CD14-positive monocyte (primary cell): ENCODE measurements at regions of chr4 and their contacts with region 1.

Region 1: DNA sequence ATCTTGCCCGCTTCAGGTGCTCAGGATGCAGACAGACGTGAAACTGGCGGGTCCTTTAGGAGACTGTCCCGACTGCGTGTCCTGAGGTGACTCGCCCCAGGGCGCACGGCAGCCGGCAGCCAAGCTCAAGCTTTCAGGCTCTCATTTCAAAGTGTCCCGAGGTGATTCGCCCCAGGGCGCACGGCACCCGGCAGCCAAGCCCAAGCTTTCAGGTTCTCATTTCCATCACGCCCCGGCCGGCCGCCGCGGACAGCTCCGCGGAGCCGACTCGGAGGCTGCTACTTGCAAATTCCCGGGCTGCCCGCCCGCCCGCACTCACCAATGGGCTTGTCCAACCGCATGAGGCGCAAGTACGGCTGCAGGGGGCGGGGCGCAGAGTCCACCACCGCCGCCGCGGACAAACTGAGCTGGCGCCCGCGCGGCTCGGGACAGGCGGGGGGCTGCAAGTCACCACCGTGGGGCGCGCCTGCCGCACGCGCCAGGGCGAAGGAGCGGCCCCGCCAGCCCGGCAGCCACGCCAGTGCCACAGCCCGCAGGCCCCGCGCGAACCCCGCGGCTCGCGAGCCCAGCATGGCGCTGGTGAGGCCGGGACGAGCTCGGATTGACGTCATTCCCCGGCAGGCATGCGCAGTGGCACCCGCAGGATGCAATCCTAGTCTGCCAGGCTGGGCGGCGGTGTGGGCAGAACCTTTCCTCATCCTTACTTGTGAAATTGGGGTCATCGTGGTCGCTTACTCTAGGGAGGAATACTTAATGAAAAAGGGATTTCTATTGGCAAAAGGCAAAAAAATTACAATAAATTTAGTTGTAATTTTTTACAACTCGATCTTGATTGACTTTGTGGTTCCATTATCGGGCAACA is at the start of gene COQ2:
- DNase-seq: peak; percentile 94 to 95 (median 94)
- H3K4me3 ChIP-seq: peak within 1 kb of the TSS; percentile 75 to 89 (median 81)
- H3K4me3 Mint-ChIP-seq: peak within 1 kb of the TSS; percentile 91 to 96
- H3K27ac ChIP-seq: peak within 1 kb of the TSS; percentile 95 to 98
- H3K27ac Mint-ChIP-seq: peak within 1 kb of the TSS; percentile 99 to 100 (median 100)
- H3K4me1 ChIP-seq: peaks cover 37 to 46% of the 10 kb centered on the region in 2 donors
- H3K4me1 Mint-ChIP-seq: peaks cover 58% of the 10 kb centered on the region
- H3K27me3 ChIP-seq: no peaks in the 10 kb centered on the region
- H3K27me3 Mint-ChIP-seq: no peaks in the 10 kb centered on the region
- CTCF ChIP-seq: peak; percentile 10
- polyA plus RNA-seq, gene COQ2: 14.7 to 48.6 (median 40.7) TPM

Region 2: GRCh38 chr4:82865592-82865991 is 418.8 kb before region 1 on chr4:
- intact Hi-C with region 1: loop called in 1 of 2 experiments (anchors 10 kb)
- DNase-seq: peak; percentile 81 to 95 (median 91)
- H3K4me3 ChIP-seq: no peak overlapping the region
- H3K4me3 Mint-ChIP-seq: no peak overlapping the region
- H3K27ac ChIP-seq: peak overlapping the region; percentile 76 to 79
- H3K27ac Mint-ChIP-seq: peak overlapping the region; percentile 90 to 97 (median 95)
- H3K4me1 ChIP-seq: peaks cover 7 to 11% of the 10 kb centered on the region in 2 donors
- H3K4me1 Mint-ChIP-seq: peaks cover 14% of the 10 kb centered on the region
- H3K27me3 ChIP-seq: no peaks in the 10 kb centered on the region
- H3K27me3 Mint-ChIP-seq: peaks cover 0 to 1% (median 0%) of the 10 kb centered on the region in 3 donors
- CTCF ChIP-seq: no peak

Region 3: DNA sequence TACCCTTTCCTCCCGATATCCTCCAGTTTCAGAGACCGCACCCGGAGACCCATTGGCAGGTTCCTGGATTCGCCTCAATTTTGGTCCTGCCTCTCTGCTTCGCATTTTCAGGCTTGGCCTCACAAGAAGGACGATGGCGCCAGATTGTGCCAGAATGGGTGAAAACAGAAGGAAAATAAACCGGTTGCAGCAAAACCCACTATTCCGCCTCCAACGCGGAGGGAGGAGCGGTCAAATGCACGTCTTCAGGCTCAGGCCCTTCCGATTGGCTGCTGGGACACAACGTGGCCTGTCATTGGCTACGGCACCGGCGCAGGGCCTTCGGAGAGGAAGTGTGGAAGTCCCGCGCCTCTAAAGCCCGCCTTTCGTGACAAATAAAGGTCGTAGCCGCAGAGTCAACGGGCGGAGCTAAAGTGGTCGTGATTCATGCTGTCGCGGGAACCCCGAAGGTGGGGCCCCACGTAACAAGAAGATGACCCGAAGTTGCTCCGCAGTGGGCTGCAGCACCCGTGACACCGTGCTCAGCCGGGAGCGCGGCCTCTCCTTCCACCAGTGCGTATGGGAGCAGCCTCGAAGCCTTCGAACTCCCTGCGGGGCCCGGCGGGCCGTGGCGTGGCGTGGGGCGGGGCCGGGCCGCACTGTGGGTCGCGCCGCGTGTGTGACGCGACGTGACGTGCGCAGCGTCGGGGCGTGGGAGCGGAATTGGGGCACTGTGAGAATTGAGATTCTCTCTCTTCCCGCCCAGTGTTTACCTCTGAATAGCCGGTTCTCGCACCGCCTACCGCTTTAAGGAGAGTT is 383.9 kb before region 1 on chr4 and contains the start of gene THAP9:
- intact Hi-C with region 1: loop called in 1 of 2 experiments (anchors 5 kb)
- DNase-seq: peak; percentile 100
- H3K4me3 ChIP-seq: peak within 1 kb of the TSS; percentile 62 to 99 (median 99)
- H3K4me3 Mint-ChIP-seq: no peak within 1 kb of the TSS
- H3K27ac ChIP-seq: peak within 1 kb of the TSS; percentile 99 to 100
- H3K27ac Mint-ChIP-seq: no peak within 1 kb of the TSS
- H3K4me1 ChIP-seq: peaks cover 21 to 44% of the 10 kb centered on the region in 2 donors
- H3K4me1 Mint-ChIP-seq: peaks cover 27% of the 10 kb centered on the region
- H3K27me3 ChIP-seq: no peaks in the 10 kb centered on the region
- H3K27me3 Mint-ChIP-seq: no peaks in the 10 kb centered on the region
- CTCF ChIP-seq: no peak
- polyA plus RNA-seq, gene THAP9: 1.4 to 1.9 (median 1.4) TPM

Region 4: DNA sequence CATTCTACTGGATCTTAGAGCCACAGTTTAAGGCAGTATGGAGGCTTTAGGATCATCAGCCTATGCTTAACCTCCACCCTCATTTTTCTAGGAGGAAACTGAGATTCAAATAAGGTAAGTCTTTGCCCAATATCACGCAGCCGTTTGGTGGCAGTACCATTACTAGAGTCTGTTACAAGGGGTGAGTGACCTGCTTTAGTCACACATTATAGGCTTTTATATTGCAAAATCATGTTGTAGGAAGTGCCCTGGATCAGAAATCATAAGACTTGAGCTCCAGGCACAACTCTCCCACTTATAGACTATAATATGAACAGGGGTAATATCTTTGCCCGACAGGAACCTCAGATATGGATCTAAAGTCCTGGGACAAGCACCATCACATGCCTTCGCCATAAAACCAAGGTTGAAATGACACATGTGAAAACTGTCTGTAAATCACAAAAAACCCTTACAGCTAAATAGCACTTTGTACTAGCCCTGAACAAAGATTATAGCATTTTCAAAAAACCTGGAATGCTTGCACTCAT is 31.0 kb after region 1 on chr4:
- intact Hi-C with region 1: loop called in 1 of 2 experiments (anchors 2 kb)
- DNase-seq: peak in 2 of 3 donors; percentile 63 to 76
- H3K4me3 ChIP-seq: no peak overlapping the region
- H3K4me3 Mint-ChIP-seq: no peak overlapping the region
- H3K27ac ChIP-seq: peak overlapping the region in 1 of 2 donors; percentile 91
- H3K27ac Mint-ChIP-seq: peak overlapping the region; percentile 96 to 100 (median 99)
- H3K4me1 ChIP-seq: peaks cover 50 to 51% of the 10 kb centered on the region in 2 donors
- H3K4me1 Mint-ChIP-seq: peaks cover 51% of the 10 kb centered on the region
- H3K27me3 ChIP-seq: no peaks in the 10 kb centered on the region
- H3K27me3 Mint-ChIP-seq: peaks cover 0 to 1% (median 0%) of the 10 kb centered on the region in 3 donors
- CTCF ChIP-seq: no peak

Region 5: GRCh38 chr4:83328521-83329187 is 44.2 kb after region 1 on chr4:
- intact Hi-C with region 1: loop called (anchors 5 kb)
- DNase-seq: peak; percentile 42 to 52 (median 50)
- H3K4me3 ChIP-seq: peak overlapping the region in 1 of 3 experiments; percentile 1
- H3K4me3 Mint-ChIP-seq: peak overlapping the region; percentile 28 to 46
- H3K27ac ChIP-seq: peak overlapping the region; percentile 10 to 48
- H3K27ac Mint-ChIP-seq: peak overlapping the region; percentile 58 to 90 (median 74)
- H3K4me1 ChIP-seq: peaks cover 58 to 79% of the 10 kb centered on the region in 2 donors
- H3K4me1 Mint-ChIP-seq: peaks cover 78% of the 10 kb centered on the region
- H3K27me3 ChIP-seq: no peaks in the 10 kb centered on the region
- H3K27me3 Mint-ChIP-seq: peaks cover 0 to 2% (median 0%) of the 10 kb centered on the region in 3 donors
- CTCF ChIP-seq: peak; percentile 45

Region 6: GRCh38 chr4:83334425-83335241 is 50.2 kb after region 1 on chr4 and contains the start of gene HPSE:
- intact Hi-C with region 1: loop called (anchors 5 kb)
- DNase-seq: peak; percentile 67 to 73 (median 70)
- H3K4me3 ChIP-seq: peak within 1 kb of the TSS; percentile 69 to 86 (median 73)
- H3K4me3 Mint-ChIP-seq: peak within 1 kb of the TSS; percentile 90 to 93
- H3K27ac ChIP-seq: peak within 1 kb of the TSS; percentile 60 to 72
- H3K27ac Mint-ChIP-seq: peak within 1 kb of the TSS; percentile 70 to 92 (median 85)
- H3K4me1 ChIP-seq: peaks cover 53 to 60% of the 10 kb centered on the region in 2 donors
- H3K4me1 Mint-ChIP-seq: peaks cover 57% of the 10 kb centered on the region
- H3K27me3 ChIP-seq: no peaks in the 10 kb centered on the region
- H3K27me3 Mint-ChIP-seq: peaks cover 1 to 6% (median 2%) of the 10 kb centered on the region in 3 donors
- CTCF ChIP-seq: no peak
- polyA plus RNA-seq, gene HPSE: 21.2 to 65.8 (median 31.2) TPM

Region 7: DNA sequence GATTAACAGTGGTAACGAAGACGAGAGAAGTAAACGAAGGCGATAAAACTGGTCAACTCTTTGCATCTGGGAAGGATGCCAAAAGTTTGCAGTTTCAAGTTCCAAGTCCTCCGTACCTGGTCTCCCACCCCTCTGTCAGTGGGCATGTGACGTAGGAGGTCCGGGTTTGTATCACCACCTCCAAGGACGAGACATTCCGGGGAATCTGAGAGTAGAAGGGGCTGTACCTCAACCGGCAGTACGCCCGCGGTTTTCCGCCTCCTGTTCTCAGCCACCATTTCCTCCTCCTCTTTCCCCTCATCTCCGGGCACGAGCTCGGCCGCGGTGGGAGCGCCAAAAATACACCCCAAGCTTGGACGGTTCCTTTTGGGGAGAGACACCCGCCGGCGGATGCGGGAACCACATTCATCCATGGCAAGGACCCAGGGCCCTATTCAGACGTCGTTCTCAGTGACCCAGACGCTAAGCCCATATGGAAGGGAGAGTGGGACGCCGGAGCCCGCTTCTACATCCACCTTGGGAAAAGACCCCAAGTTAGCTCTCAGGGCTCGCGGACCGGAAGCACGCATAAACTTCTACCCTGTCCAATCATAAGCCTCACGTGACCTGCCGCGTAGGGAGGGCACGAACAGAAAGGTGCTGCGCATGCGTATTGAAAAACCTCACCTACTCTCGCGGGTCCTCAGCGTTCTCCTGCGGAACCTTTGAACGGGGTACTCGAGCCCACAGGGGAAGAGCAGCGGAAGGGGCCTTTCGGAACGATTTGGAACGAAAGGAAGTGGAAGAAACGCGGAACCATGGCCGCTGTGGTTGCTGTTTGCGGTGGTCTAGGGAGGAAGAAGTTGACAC is 171.1 kb after region 1 on chr4 and contains the starts of genes HELQ and MRPS18C:
- intact Hi-C with region 1: loop called in 1 of 2 experiments (anchors 10 kb)
- DNase-seq: peak; percentile 98 to 99 (median 99)
- H3K4me3 ChIP-seq: peak within 1 kb of the TSS; percentile 94 to 97 (median 95)
- H3K4me3 Mint-ChIP-seq: peak within 1 kb of the TSS; percentile 96 to 98
- H3K27ac ChIP-seq: peak within 1 kb of the TSS; percentile 99
- H3K27ac Mint-ChIP-seq: peak within 1 kb of the TSS; percentile 98 to 100 (median 100)
- H3K4me1 ChIP-seq: peaks cover 21 to 31% of the 10 kb centered on the region in 2 donors
- H3K4me1 Mint-ChIP-seq: peaks cover 27% of the 10 kb centered on the region
- H3K27me3 ChIP-seq: no peaks in the 10 kb centered on the region
- H3K27me3 Mint-ChIP-seq: peaks cover 0 to 3% (median 1%) of the 10 kb centered on the region in 3 donors
- CTCF ChIP-seq: peak; percentile 34
- polyA plus RNA-seq, gene HELQ: 7.0 to 11.3 (median 11.1) TPM
- polyA plus RNA-seq, gene MRPS18C: 13.6 to 70.5 (median 42.4) TPM